ENCODE measurements at regions of chr5 and their contacts with region 1.

Region 1: DNA sequence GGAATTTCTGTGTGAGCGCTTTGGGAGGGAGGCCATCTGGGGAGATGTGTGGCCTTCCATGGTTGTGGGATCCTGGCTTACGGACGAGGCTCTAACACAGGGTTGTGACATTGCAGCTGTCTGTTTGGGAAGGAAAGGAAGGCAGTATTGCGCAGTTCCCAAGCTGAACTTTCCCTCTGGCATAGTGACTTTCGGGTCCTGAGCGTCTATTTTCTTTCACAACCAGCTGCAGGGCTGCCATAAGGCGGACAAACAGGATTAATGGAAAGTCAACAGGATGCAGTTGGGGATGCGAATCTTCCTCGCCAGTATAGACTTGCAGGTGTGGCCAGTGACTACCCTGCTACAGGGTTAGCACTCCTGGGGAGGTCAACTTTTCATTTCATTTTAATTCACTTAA is 25.9 kb downstream of the CCT5 start:
- DNase-seq: no peak
- CTCF ChIP-seq: no peak

Region 2: DNA sequence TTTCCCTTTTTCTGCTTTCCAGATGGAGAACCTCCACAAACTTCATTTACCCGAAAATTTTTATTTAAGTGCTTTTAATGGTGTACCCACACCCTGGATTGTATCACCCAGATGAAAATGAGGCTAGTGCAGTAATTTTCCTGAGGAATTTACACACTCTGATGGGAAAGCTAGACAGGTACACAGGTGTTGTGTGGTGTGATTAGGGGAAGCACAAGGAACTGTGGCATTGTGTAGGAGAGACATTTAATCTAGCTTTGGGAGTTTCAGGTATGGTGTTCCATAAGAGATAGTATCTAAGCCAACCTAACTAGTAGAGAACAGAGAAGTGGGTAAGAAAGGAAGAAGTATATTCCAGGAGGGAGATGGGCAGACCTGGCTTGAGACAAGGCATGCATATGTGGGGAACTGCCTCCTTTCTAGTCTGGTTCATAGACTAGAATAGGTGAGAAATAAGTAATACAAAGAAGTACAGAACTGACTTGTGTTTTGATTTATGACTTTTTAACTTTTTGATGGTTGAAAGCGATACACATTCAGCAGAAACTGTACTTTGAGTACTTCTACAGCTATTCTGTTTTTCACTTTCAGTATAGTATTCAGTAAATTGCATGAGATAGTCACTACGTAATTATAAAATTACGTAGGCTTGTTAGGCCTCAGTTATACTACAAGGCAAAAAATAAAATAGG is 142.8 kb after region 1 on chr5:
- in situ Hi-C with region 1: loop called (anchors 10 kb)
- DNase-seq: no peak
- CTCF ChIP-seq: no peak

Measured in GM13976 (cell line).